Heart left ventricle (tissue), 16 donors: ENCODE measurements at regions of chr5 and their contacts with region 1.

Region 1: DNA sequence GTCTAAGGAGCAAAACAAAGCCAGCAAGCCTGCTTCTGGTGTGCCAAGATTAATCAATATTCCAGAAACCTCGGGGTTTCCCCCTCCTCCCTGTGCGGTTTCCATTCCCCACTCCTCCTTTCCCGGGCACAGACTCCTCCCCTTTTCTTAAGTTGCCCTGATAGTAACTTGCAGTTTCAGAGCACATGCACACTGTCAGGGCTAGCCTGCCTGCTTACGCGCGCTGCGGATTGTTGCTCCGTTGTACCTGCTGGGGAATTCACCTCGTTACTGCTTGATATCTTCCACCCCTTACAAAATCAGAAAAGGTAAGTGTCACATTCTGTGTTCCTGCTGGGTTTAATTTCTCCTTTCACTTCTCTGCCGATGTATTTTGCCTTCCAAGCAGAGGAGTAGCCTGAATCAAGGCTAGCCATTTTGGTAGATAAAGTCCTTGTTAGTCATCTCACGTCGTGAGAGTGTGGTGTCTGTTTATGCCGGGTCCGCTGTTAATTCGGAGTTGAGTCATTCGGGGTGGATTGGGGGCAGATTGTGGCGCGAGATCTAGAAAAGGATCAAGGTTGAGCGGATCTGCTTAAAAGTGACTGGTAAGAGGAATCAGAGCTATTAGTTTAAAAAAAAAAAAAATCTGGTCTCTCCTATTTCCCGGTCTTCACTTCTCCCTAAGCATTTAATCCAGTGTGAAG is at the start of gene SLC1A3:
- DNase-seq: peak in 4 of 5 donors; percentile 36 to 62 (median 46)
- ATAC-seq: peak; percentile 81 to 91 (median 86)
- H3K4me3 ChIP-seq: peak within 1 kb of the TSS; percentile 26 to 68 (median 62)
- H3K27ac ChIP-seq: peak within 1 kb of the TSS; percentile 58 to 91 (median 86)
- H3K4me1 ChIP-seq: peaks cover 0 to 29% (median 2%) of the 10 kb centered on the region in 12 donors
- H3K27me3 ChIP-seq: peaks cover 0 to 5% (median 0%) of the 10 kb centered on the region in 9 donors
- CTCF ChIP-seq: no peak
- POLR2A ChIP-seq: peak in 1 of 2 donors; percentile 28
- total RNA-seq, gene SLC1A3: 49.5 to 120 (median 66.1) TPM

Region 2: DNA sequence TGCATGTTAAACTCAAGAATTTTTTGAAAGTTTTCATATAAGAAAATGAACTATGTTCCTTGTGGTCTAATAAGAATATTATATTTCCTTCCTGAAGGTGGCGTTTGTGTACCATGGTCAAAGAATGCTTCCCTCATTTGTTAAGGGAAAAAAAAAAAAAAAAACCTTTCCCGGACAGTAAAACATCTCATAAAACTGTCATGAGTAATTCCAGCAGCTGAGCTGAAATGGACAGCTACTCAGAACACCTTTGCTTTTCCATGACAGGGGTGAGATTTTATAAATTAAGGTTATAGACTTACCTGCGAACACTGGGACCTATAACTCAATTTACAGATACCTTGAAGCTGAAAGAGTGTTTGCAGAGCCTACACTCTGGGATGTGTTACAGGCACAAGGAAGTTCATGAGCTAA is 191.7 kb before region 1 on chr5:
- intact Hi-C with region 1: loop called in 8 of 10 experiments (anchors 5 to 10 kb)
- DNase-seq: no peak
- ATAC-seq: peak in 3 of 4 donors; percentile 41 to 65 (median 49)
- H3K4me3 ChIP-seq: no peak overlapping the region
- H3K27ac ChIP-seq: peak overlapping the region in 1 of 12 donors; percentile 25
- H3K4me1 ChIP-seq: peaks cover 0 to 18% (median 0%) of the 10 kb centered on the region in 12 donors
- H3K27me3 ChIP-seq: no peaks in the 10 kb centered on the region
- CTCF ChIP-seq: peak; percentile 25 to 66 (median 53)
- POLR2A ChIP-seq: no peak

Region 3: GRCh38 chr5:36521838-36522745 is 84.5 kb before region 1 on chr5:
- intact Hi-C with region 1: loop called in 2 of 10 experiments (anchors 5 kb)
- DNase-seq: peak in 4 of 5 donors; percentile 28 to 48 (median 41)
- ATAC-seq: peak; percentile 92 to 95 (median 93)
- H3K4me3 ChIP-seq: no peak overlapping the region
- H3K27ac ChIP-seq: peak overlapping the region in 11 of 12 donors; percentile 57 to 92 (median 76)
- H3K4me1 ChIP-seq: peaks cover 0 to 26% (median 7%) of the 10 kb centered on the region in 12 donors
- H3K27me3 ChIP-seq: no peaks in the 10 kb centered on the region
- CTCF ChIP-seq: no peak
- POLR2A ChIP-seq: no peak

Region 4: GRCh38 chr5:36529142-36529541 is 77.4 kb before region 1 on chr5:
- intact Hi-C with region 1: loop called in 2 of 10 experiments (anchors 5 kb)
- DNase-seq: no peak
- ATAC-seq: no peak
- H3K4me3 ChIP-seq: no peak overlapping the region
- H3K27ac ChIP-seq: no peak overlapping the region
- H3K4me1 ChIP-seq: peaks cover 0 to 10% (median 0%) of the 10 kb centered on the region in 12 donors
- H3K27me3 ChIP-seq: no peaks in the 10 kb centered on the region
- CTCF ChIP-seq: no peak
- POLR2A ChIP-seq: no peak

Region 5: DNA sequence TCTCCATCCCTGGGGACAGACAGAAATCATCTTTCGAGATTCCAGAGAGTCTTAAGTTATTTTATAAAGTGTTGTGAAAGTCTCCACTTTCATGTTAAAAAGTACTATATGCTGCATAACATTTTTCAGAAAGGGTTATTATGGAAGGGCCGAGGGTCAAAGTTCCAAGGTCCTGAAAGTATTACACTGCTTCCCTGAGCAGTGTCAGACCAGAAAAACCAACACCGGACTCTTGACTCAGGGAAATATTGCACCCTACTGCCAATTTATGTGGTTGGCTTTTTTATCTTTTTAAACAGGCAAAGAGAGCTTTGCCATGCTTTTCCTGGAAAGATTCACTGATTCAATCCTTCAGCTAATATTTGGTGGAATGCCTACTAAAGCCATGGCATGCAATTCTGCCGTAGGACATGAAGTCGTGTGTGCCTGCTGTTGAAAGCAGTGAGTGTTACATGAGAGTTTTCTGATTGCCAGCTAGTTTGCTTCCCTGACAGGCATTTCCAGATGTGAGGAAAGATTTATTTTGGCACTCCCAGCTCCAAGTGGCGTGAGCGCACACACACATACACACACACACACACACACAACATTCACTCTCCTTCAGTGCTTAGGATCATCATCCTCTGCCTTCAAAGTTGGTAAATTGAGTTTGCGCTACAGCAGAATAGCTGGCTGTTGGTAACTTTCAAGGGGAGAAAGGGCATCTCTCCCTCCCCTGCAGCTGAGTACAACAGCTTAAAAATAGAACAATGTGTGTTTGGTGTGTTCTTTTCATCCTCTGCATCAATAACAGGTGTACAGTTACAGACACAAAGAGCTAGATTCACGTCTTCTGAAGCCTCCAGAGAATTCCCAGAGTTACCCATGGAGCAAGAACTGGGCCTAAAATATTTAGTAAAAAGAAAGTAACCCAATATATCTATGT is 45.5 kb after region 1 on chr5:
- intact Hi-C with region 1: loop called in 5 of 10 experiments (anchors 5 kb)
- DNase-seq: peak in 1 of 5 donors; percentile 23
- ATAC-seq: peak; percentile 69 to 86 (median 75)
- H3K4me3 ChIP-seq: no peak overlapping the region
- H3K27ac ChIP-seq: peak overlapping the region; percentile 27 to 86 (median 74)
- H3K4me1 ChIP-seq: peaks cover 0 to 59% (median 24%) of the 10 kb centered on the region in 12 donors
- H3K27me3 ChIP-seq: no peaks in the 10 kb centered on the region
- CTCF ChIP-seq: no peak
- POLR2A ChIP-seq: no peak

Region 6: DNA sequence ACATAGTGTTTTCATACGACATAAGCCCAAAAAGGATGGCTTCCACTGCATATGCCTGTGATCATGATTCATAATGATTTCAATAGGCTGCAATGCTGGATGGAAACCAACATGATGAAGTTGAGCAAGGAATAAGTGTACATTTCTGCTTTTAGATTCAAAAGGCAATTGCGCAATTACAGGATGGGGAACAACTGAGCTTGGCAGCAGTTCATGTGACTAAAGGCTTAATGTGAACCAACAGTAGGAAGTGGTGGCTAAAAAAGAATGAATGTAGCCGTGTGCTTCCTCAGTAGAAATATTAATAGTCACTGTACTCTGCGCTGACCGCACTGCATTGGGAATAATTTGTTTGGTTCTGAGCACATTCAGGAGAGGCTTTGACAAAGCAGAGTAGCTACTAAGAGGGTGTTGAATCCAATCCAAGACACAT is 51.0 kb after region 1 on chr5:
- intact Hi-C with region 1: loop called in 4 of 10 experiments (anchors 5 kb)
- DNase-seq: peak in 4 of 5 donors; percentile 63 to 72 (median 68)
- ATAC-seq: peak; percentile 86 to 96 (median 92)
- H3K4me3 ChIP-seq: no peak overlapping the region
- H3K27ac ChIP-seq: peak overlapping the region; percentile 56 to 82 (median 74)
- H3K4me1 ChIP-seq: peaks cover 0 to 68% (median 38%) of the 10 kb centered on the region in 12 donors
- H3K27me3 ChIP-seq: no peaks in the 10 kb centered on the region
- CTCF ChIP-seq: no peak
- POLR2A ChIP-seq: no peak

Region 7: GRCh38 chr5:36820900-36821299 is 214.3 kb after region 1 on chr5:
- intact Hi-C with region 1: no loop called
- DNase-seq: no peak
- ATAC-seq: no peak
- H3K4me3 ChIP-seq: no peak overlapping the region
- H3K27ac ChIP-seq: no peak overlapping the region
- H3K4me1 ChIP-seq: no peaks in the 10 kb centered on the region
- H3K27me3 ChIP-seq: peaks cover 0 to 3% (median 0%) of the 10 kb centered on the region in 9 donors
- CTCF ChIP-seq: no peak
- POLR2A ChIP-seq: no peak

Region 8: GRCh38 chr5:36870399-36871040 is 263.9 kb after region 1 on chr5:
- intact Hi-C with region 1: no loop called
- DNase-seq: no peak
- ATAC-seq: peak; percentile 39 to 74 (median 69)
- H3K4me3 ChIP-seq: no peak overlapping the region
- H3K27ac ChIP-seq: no peak overlapping the region
- H3K4me1 ChIP-seq: peaks cover 3 to 39% (median 21%) of the 10 kb centered on the region in 12 donors
- H3K27me3 ChIP-seq: no peaks in the 10 kb centered on the region
- CTCF ChIP-seq: peak; percentile 49 to 80 (median 62)
- POLR2A ChIP-seq: no peak